ENCODE measurements at regions of chr2 and their contacts with region 1.

Region 1: GRCh38 chr2:69933839-69934613 is 19.1 kb downstream of the MXD1 start:
- DNase-seq: no peak
- ATAC-seq: peak; percentile 50
- H3K4me3 Mint-ChIP-seq: no peak overlapping the region
- H3K27ac Mint-ChIP-seq: peak overlapping the region; percentile 30
- H3K4me1 Mint-ChIP-seq: peaks cover 37% of the 10 kb centered on the region
- H3K27me3 Mint-ChIP-seq: no peaks in the 10 kb centered on the region

Region 2: DNA sequence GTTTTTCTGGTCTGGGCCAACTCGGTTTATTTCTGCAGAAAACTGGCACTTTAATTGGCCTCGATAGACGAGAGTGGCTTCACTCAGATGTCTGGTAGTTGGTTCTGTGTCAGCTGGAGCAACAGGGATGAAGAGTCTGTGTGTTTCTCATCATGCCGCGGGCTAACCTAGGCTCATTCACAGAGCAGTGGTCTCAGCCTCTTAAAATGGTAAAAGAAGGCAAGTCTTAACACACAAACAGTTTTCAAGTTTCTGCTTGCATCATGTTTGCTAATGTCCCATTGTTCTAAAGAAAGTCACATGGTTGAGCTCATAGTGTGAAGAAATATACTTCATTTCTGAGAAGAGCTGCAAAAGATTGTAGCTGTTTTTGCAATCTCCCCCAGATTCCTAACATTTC is 229.6 kb before region 1 on chr2:
- CTCF ChIA-PET with region 1: no interaction called
- DNase-seq: no peak
- ATAC-seq: no peak
- H3K4me3 Mint-ChIP-seq: no peak overlapping the region
- H3K27ac Mint-ChIP-seq: no peak overlapping the region
- H3K4me1 Mint-ChIP-seq: no peaks in the 10 kb centered on the region
- H3K27me3 Mint-ChIP-seq: no peaks in the 10 kb centered on the region

Region 3: GRCh38 chr2:69946351-69947077 is 12.5 kb after region 1 on chr2:
- CTCF ChIA-PET with region 1: interaction called, 10 read pairs
- DNase-seq: peak; percentile 89
- ATAC-seq: peak; percentile 94
- H3K4me3 Mint-ChIP-seq: peak overlapping the region; percentile 52
- H3K27ac Mint-ChIP-seq: peak overlapping the region; percentile 93
- H3K4me1 Mint-ChIP-seq: peaks cover 41% of the 10 kb centered on the region
- H3K27me3 Mint-ChIP-seq: no peaks in the 10 kb centered on the region